ENCODE measurements at regions of chrX and their contacts with region 1.

Region 1: GRCh38 chrX:22135994-22136684 is 104.0 kb downstream of the PHEX start:
- DNase-seq: peak; percentile 43
- H3K4me3 Mint-ChIP-seq: peak overlapping the region; percentile 27
- H3K27ac Mint-ChIP-seq: peak overlapping the region; percentile 66
- H3K4me1 Mint-ChIP-seq: peaks cover 28% of the 10 kb centered on the region
- H3K27me3 Mint-ChIP-seq: no peaks in the 10 kb centered on the region
- CTCF ChIP-seq: peak; percentile 23

Region 2: DNA sequence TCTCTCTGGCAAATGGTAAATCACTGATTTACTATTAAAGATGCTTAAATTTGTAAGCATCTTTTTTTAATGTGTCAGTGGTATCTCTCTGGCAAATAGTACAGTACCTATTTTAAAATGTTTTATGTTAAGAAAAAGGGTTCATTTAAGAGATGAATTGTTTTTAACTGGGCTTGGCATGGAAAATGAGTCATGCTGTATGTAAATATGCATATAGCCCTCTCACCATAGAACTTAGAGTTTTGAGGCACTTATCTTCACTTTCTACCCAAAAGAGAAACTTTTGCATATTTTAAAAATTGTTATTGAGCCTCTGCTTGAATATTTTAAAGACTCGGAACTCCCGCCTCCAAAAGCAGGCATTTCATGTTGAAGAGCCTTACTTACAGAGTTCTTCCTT is 515.9 kb before region 1 on chrX:
- CTCF ChIA-PET with region 1: no interaction called
- intact Hi-C with region 1: no loop called
- DNase-seq: no peak
- H3K4me3 Mint-ChIP-seq: no peak overlapping the region
- H3K27ac Mint-ChIP-seq: no peak overlapping the region
- H3K4me1 Mint-ChIP-seq: no peaks in the 10 kb centered on the region
- H3K27me3 Mint-ChIP-seq: no peaks in the 10 kb centered on the region
- CTCF ChIP-seq: no peak

Region 3: DNA sequence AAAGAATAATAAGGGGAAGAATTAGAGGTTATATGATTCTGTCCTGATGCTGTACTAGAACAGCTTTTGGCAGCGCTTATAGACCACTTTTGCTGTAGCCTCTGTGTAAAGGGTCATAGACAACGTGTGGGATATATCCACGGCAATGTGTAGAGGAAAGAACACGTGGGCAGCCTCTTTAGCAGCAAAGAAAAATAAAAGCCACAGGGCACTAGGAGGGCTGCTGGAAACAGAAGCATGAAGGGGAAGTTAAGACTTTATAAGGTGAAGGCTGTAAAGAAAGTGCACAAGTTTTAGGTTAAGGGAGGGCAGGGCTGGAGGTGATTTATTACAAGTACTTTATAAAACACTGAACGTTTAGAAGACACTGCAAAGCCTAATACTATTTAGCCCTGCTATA is 124.1 kb before region 1 on chrX:
- CTCF ChIA-PET with region 1: no interaction called
- intact Hi-C with region 1: no loop called
- DNase-seq: no peak
- H3K4me3 Mint-ChIP-seq: no peak overlapping the region
- H3K27ac Mint-ChIP-seq: no peak overlapping the region
- H3K4me1 Mint-ChIP-seq: no peaks in the 10 kb centered on the region
- H3K27me3 Mint-ChIP-seq: no peaks in the 10 kb centered on the region
- CTCF ChIP-seq: no peak

Region 4: GRCh38 chrX:22053481-22053880 is 82.7 kb before region 1 on chrX:
- CTCF ChIA-PET with region 1: no interaction called
- intact Hi-C with region 1: no loop called
- DNase-seq: no peak
- H3K4me3 Mint-ChIP-seq: no peak overlapping the region
- H3K27ac Mint-ChIP-seq: no peak overlapping the region
- H3K4me1 Mint-ChIP-seq: no peaks in the 10 kb centered on the region
- H3K27me3 Mint-ChIP-seq: no peaks in the 10 kb centered on the region
- CTCF ChIP-seq: no peak

Region 5: DNA sequence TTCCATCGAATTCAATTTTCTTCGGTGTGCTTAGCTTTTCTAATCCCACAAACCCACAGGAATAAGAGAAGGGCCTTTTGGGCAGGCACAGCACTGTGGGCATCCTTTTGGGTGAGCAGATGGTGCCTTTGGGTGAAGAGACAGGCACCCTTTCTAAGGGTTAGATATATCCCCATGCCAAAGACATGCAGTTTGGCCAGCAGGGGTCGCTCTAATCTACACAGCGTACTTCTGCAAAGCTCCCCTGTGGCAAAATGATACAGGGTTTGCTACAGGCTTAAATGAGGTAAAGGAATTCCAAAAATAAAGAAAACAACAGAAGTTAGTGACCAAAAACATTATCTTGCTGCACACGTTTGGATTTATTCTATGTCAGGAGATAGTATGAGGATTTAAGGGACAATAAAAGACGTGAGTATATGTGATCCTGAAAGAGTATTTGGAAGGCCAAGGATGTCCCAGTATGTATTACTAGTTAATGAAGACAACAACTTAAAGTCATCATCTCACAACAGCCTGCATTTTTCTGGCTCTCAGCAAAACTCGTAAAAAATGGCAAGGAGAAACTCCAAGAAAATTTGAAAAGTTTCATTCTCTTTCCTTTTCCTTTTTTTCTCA is 54.6 kb before region 1 on chrX:
- CTCF ChIA-PET with region 1: interaction called, 4 read pairs
- intact Hi-C with region 1: loop called (anchors 1 kb)
- DNase-seq: peak; percentile 65
- H3K4me3 Mint-ChIP-seq: no peak overlapping the region
- H3K27ac Mint-ChIP-seq: no peak overlapping the region
- H3K4me1 Mint-ChIP-seq: peaks cover 8% of the 10 kb centered on the region
- H3K27me3 Mint-ChIP-seq: no peaks in the 10 kb centered on the region
- CTCF ChIP-seq: peak; percentile 51

Region 6: DNA sequence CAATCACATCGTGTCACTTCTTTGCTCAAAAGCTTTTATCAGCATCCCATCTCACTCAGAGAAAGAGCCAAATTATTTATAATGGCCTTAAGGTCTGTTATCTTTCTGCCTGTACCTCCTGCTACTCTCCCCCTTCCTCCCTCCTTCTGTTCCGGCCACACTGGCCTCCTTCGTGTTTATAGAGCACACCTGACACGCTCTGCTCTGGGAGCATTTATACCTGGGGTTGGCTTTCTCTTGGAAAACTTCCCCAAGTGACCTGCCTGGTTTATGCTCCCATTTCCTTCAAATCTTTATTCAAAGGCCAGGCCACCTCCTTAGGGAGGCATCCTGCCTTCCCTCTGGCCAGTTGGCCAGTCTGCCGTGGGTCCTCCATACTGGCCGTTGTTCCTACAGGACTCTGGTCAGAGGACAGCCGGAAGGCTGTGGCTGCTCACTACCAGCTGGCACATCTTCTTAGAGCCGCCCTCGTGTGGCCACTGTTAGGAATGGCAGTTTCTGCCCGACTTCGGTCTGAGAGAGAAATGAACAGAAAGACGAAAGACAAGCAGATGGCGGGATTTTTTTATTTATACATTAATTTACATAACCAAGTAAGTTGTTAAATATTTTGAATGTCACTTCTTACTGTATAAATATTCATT is 56.4 kb after region 1 on chrX:
- CTCF ChIA-PET with region 1: interaction called, 3 read pairs
- intact Hi-C with region 1: loop called (anchors 2 kb)
- DNase-seq: peak; percentile 68
- H3K4me3 Mint-ChIP-seq: peak overlapping the region; percentile 55
- H3K27ac Mint-ChIP-seq: peak overlapping the region; percentile 6
- H3K4me1 Mint-ChIP-seq: peaks cover 9% of the 10 kb centered on the region
- H3K27me3 Mint-ChIP-seq: no peaks in the 10 kb centered on the region
- CTCF ChIP-seq: peak; percentile 59

Region 7: DNA sequence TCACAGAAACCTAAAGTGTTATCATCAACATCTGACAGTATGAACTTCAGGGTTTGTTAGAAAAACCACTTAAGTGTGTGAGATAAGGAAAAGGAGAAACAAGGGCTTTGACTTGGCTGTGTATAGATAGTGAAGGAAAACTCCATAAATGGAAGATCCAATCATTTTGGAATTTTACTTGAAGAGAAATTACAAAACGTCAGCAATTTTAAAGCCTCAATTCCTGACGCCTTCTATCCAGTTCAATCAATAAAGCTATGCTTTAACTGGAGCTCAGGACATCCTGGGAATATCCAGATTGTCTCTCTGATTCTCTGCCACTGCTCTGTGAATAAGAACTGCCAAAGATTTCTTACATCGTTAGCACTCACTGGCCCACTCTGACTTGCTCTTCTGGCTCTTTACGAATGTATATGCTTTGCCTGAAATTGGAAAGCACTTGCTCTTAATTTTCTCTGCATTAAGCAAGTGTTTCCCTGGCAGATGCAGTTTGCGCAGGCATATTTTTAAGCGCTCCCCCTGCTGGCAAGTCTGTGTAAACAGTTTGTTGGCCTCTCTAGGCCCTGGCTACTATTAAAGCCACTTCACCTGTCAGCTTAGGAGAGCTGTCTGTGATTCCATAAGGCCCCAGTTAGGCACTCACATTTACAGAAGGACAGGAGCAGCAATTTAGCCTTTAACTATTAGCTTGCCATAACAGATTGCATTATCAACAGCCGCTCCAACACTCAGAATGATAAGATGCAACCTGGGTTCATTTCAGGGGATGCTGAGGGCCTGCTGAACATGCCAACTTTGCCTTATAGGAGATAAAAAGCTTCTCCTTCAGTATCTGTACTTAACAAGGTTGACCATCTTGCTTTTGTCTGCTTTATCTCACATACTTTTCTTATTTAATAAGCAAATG is 612.2 kb after region 1 on chrX:
- CTCF ChIA-PET with region 1: interaction called, 10 read pairs
- intact Hi-C with region 1: loop called (anchors 1 kb)
- DNase-seq: peak; percentile 50
- H3K4me3 Mint-ChIP-seq: no peak overlapping the region
- H3K27ac Mint-ChIP-seq: no peak overlapping the region
- H3K4me1 Mint-ChIP-seq: no peaks in the 10 kb centered on the region
- H3K27me3 Mint-ChIP-seq: no peaks in the 10 kb centered on the region
- CTCF ChIP-seq: no peak